ENCODE measurements at regions of chr5 and their contacts with region 1.

Region 1: GRCh38 chr5:139711067-139711905 is 63.1 kb downstream of the CXXC5 start:
- DNase-seq: peak; percentile 32 to 90 (median 71)
- ATAC-seq: peak; percentile 60
- H3K4me3 ChIP-seq: peak overlapping the region; percentile 63 to 64
- H3K4me3 Mint-ChIP-seq: peak overlapping the region; percentile 77
- H3K27ac ChIP-seq: peak overlapping the region; percentile 66 to 84
- H3K27ac Mint-ChIP-seq: no peak overlapping the region
- H3K4me1 ChIP-seq: peaks cover 28% of the 10 kb centered on the region
- H3K4me1 Mint-ChIP-seq: peaks cover 39% of the 10 kb centered on the region
- H3K27me3 ChIP-seq: no peaks in the 10 kb centered on the region
- H3K27me3 Mint-ChIP-seq: no peaks in the 10 kb centered on the region
- CTCF ChIP-seq: no peak

Region 2: DNA sequence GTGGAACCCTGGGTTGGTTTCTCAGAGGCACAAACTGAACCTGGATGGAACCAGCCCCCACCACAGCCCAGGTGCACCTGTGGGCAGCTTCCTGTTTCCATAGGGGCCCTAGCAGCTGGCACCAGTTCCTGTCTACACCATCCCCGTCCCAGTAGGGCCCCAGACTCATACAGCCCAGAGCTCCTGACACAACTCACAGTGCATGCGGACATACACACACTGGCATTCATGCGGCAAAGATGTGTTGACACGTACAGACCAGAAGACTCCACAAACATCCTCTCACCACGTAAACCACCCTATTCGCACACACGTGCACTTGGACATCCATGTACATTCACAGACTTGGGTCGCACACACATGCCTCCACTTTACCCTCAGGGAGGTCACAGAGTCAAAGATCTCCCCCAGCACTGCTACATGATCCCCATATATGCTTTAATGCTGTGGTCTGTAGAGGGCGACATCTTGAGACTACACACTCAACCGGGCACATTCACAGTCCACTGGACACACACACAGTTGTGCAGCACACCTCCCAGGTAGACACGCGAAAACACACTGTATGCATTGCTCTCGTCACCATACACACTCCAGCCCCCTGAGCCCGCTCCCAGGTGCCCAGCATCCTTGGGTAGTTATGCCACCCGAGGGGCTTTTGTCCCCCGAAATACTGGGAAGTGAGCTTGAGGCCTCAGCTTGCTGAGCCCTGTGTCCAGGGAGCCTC is 40.8 kb before region 1 on chr5:
- CTCF ChIA-PET with region 1: interaction called, 5 read pairs
- POLR2A ChIA-PET with region 1: interaction called, 3 read pairs
- intact Hi-C with region 1: loop called (anchors 2 kb)
- DNase-seq: peak in 5 of 9 experiments; percentile 34 to 68 (median 53)
- ATAC-seq: peak; percentile 31
- H3K4me3 ChIP-seq: peak overlapping the region; percentile 68 to 72
- H3K4me3 Mint-ChIP-seq: peak overlapping the region; percentile 79
- H3K27ac ChIP-seq: peak overlapping the region; percentile 26 to 88
- H3K27ac Mint-ChIP-seq: peak overlapping the region; percentile 90
- H3K4me1 ChIP-seq: peaks cover 53% of the 10 kb centered on the region
- H3K4me1 Mint-ChIP-seq: peaks cover 47% of the 10 kb centered on the region
- H3K27me3 ChIP-seq: no peaks in the 10 kb centered on the region
- H3K27me3 Mint-ChIP-seq: no peaks in the 10 kb centered on the region
- CTCF ChIP-seq: peak; percentile 28

Region 3: DNA sequence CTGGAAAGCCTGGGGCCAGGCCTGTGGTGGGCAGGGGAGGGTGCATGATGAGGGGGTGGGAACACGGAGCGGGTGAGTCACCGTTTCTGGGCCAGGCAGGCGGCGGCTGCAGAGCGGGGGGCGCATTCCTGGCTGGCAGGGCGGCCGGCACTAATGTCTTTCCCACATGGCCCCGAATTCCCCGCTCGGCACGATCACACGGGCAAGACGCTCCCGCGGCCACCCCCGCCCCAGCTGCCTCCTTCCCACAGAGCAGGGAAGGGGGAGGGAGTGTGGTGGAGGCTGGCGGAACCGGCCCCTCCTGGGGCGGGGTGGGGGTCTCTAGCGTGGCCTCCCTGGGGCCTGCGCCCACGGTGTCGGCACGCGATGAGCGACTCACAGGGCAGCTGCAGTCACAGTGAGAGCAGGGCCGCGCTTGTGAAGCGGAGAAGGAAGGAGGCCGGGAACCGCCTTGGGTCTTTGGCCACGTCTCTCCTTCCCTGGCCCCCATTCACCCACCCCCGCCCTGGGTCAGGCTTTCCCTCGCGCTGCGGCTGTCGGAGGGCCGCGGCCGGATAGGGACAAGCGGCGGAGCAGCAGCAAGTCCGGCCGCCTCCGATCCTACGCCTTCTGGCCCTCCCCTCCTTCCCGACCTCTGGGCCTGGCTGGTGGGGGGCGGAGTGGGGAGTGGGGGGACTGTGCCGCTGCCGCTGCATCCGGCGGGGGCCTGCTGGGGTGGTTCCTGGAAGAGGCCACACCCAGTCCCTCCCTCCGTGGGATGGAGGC is 14.2 kb before region 1 on chr5:
- CTCF ChIA-PET with region 1: interaction called, 9 read pairs
- POLR2A ChIA-PET with region 1: interaction called, 7 read pairs
- intact Hi-C with region 1: loop called in 1 of 2 experiments (anchors 1 kb)
- DNase-seq: peak in 5 of 9 experiments; percentile 14 to 47 (median 35)
- ATAC-seq: peak; percentile 50
- H3K4me3 ChIP-seq: peak overlapping the region; percentile 42 to 45
- H3K4me3 Mint-ChIP-seq: peak overlapping the region; percentile 80
- H3K27ac ChIP-seq: no peak overlapping the region
- H3K27ac Mint-ChIP-seq: no peak overlapping the region
- H3K4me1 ChIP-seq: peaks cover 34% of the 10 kb centered on the region
- H3K4me1 Mint-ChIP-seq: peaks cover 35% of the 10 kb centered on the region
- H3K27me3 ChIP-seq: peaks cover 0 to 9% of the 10 kb centered on the region in 2 experiments
- H3K27me3 Mint-ChIP-seq: peaks cover 6% of the 10 kb centered on the region
- CTCF ChIP-seq: no peak

Region 4: GRCh38 chr5:139745800-139746690 is 34.8 kb after region 1 on chr5:
- CTCF ChIA-PET with region 1: interaction called, 3 read pairs
- POLR2A ChIA-PET with region 1: interaction called, 10 read pairs
- intact Hi-C with region 1: loop called (anchors 1 kb)
- DNase-seq: peak in 8 of 9 experiments; percentile 24 to 85 (median 58)
- ATAC-seq: peak; percentile 50
- H3K4me3 ChIP-seq: peak overlapping the region; percentile 61 to 73
- H3K4me3 Mint-ChIP-seq: peak overlapping the region; percentile 95
- H3K27ac ChIP-seq: peak overlapping the region in 1 of 2 experiments; percentile 89
- H3K27ac Mint-ChIP-seq: peak overlapping the region; percentile 64
- H3K4me1 ChIP-seq: peaks cover 20% of the 10 kb centered on the region
- H3K4me1 Mint-ChIP-seq: peaks cover 19% of the 10 kb centered on the region
- H3K27me3 ChIP-seq: no peaks in the 10 kb centered on the region
- H3K27me3 Mint-ChIP-seq: peaks cover 3% of the 10 kb centered on the region
- CTCF ChIP-seq: no peak

Region 5: DNA sequence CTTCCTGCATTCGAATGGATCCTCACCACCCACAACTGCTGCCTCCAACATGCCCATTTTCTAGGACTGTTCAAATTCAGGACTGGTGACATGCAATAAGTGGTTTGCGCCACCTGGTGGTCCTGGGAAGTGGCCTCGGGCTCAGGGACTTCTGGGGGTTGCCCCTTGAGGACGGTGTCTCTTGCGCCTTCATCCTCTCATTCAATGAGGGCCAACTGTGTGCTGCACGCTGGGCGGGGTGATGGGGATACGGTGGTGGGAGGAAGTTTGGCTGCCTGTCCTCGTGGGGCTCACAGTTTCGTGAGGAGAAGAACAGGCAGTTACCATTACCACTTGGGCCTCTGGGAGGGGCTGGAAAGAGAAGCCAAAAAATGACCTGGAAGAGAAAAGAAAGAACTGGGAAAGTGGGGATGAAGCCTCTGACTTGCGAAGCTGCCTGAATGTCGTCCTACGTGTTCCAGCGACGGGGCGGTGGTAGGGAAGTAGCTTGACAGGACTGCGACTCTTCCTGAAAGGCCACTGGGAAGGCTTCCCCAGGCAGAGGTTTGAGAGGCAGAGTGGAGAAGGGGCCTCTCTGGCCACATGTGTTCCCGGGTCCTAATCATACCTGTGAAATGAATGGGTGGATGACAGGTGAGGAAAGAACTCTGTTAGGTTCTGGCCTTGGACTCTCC is 133.3 kb after region 1 on chr5:
- CTCF ChIA-PET with region 1: no interaction called
- POLR2A ChIA-PET with region 1: no interaction called
- intact Hi-C with region 1: loop called in 1 of 2 experiments (anchors 5 kb)
- DNase-seq: peak; percentile 50 to 83 (median 77)
- ATAC-seq: peak; percentile 24
- H3K4me3 ChIP-seq: no peak overlapping the region
- H3K4me3 Mint-ChIP-seq: no peak overlapping the region
- H3K27ac ChIP-seq: no peak overlapping the region
- H3K27ac Mint-ChIP-seq: no peak overlapping the region
- H3K4me1 ChIP-seq: no peaks in the 10 kb centered on the region
- H3K4me1 Mint-ChIP-seq: peaks cover 15% of the 10 kb centered on the region
- H3K27me3 ChIP-seq: no peaks in the 10 kb centered on the region
- H3K27me3 Mint-ChIP-seq: peaks cover 18% of the 10 kb centered on the region
- CTCF ChIP-seq: peak; percentile 76

Region 6: DNA sequence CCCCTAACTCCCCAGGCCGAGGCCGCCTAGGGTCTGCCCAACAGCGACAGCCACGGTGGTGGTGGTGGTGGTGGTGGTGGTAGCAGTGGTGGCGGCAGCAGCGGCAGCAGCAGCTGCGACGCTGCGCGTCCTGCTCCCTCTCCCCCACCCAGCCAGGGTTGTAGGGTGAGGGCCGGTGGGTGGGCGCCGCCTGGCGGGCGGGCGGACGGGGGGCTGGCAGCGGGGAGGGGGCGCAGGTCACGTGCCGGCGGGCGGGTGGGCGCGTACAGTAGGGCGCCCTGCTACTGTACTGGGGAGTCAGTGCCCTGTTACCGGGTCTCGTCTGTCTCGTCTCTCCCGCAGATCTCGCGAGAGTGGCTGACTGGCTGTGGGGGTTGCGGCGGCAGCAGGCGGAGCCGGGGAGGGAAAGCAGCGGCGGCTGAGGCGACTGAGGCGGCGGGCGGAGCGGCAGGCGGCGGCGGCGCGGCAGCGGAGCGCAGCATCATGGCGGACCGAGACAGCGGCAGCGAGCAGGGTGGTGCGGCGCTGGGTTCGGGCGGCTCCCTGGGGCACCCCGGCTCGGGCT is 402.5 kb after region 1 on chr5 and contains the start of gene PURA:
- CTCF ChIA-PET with region 1: no interaction called
- POLR2A ChIA-PET with region 1: no interaction called
- intact Hi-C with region 1: no loop called
- DNase-seq: peak; percentile 93 to 98 (median 98)
- ATAC-seq: peak; percentile 91
- H3K4me3 ChIP-seq: peak within 1 kb of the TSS; percentile 74 to 88
- H3K4me3 Mint-ChIP-seq: peak within 1 kb of the TSS; percentile 91
- H3K27ac ChIP-seq: peak within 1 kb of the TSS; percentile 82 to 84
- H3K27ac Mint-ChIP-seq: peak within 1 kb of the TSS; percentile 95
- H3K4me1 ChIP-seq: peaks cover 69% of the 10 kb centered on the region
- H3K4me1 Mint-ChIP-seq: peaks cover 77% of the 10 kb centered on the region
- H3K27me3 ChIP-seq: no peaks in the 10 kb centered on the region
- H3K27me3 Mint-ChIP-seq: peaks cover 12% of the 10 kb centered on the region
- CTCF ChIP-seq: no peak
- total RNA-seq, gene PURA: 4.0 to 4.3 TPM

Measured in CD8-positive, alpha-beta T cell (primary cell).